Activated CD4-positive, alpha-beta T cell treated with anti-CD3 and anti-CD28 coated beads for 36 hours (primary cell): ENCODE measurements at regions of chr5 and their contacts with region 1.

Region 1: GRCh38 chr5:143605403-143606005 is 202.0 kb upstream of the NR3C1 start:
- DNase-seq: peak; percentile 55
- ATAC-seq: peak; percentile 58
- H3K4me3 Mint-ChIP-seq: peak overlapping the region; percentile 34
- H3K27ac Mint-ChIP-seq: peak overlapping the region; percentile 91
- H3K4me1 Mint-ChIP-seq: peaks cover 35% of the 10 kb centered on the region
- H3K27me3 Mint-ChIP-seq: peaks cover 4% of the 10 kb centered on the region

Region 2: GRCh38 chr5:143002459-143003328 is 602.8 kb before region 1 on chr5:
- CTCF ChIA-PET with region 1: no interaction called
- POLR2A ChIA-PET with region 1: no interaction called
- intact Hi-C with region 1: loop called in 1 of 2 experiments (anchors 10 kb)
- DNase-seq: peak; percentile 78
- ATAC-seq: peak; percentile 92
- H3K4me3 Mint-ChIP-seq: peak overlapping the region; percentile 17
- H3K27ac Mint-ChIP-seq: peak overlapping the region; percentile 93
- H3K4me1 Mint-ChIP-seq: peaks cover 50% of the 10 kb centered on the region
- H3K27me3 Mint-ChIP-seq: no peaks in the 10 kb centered on the region

Region 3: GRCh38 chr5:143101121-143101520 is 504.4 kb before region 1 on chr5:
- CTCF ChIA-PET with region 1: no interaction called
- POLR2A ChIA-PET with region 1: no interaction called
- intact Hi-C with region 1: loop called in 1 of 2 experiments (anchors 5 kb)
- DNase-seq: no peak
- ATAC-seq: peak; percentile 81
- H3K4me3 Mint-ChIP-seq: peak overlapping the region; percentile 7
- H3K27ac Mint-ChIP-seq: peak overlapping the region; percentile 68
- H3K4me1 Mint-ChIP-seq: peaks cover 31% of the 10 kb centered on the region
- H3K27me3 Mint-ChIP-seq: no peaks in the 10 kb centered on the region

Region 4: DNA sequence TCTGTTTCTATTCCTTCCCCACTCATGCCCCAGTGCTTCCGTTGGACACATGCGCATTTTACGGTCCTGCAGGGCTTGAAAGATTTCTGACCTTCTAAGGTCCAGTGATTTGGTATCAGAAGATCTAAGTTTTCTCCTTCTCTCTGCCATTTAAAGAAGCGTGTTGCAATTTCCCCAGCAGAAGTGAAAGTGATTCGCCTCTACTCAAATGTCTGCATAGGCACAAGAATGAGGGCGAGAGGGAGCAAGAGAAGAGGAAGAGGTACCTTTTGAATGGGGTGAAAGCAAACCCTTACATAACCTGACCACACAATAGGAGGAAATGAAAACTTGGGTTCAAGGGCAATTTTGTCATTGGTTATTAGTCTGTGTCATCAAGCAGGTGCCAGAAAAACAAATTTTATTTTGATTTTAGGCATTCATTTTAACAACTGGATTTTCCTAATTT is 170.3 kb before region 1 on chr5:
- CTCF ChIA-PET with region 1: interaction called, 7 read pairs
- POLR2A ChIA-PET with region 1: interaction called, 5 read pairs
- intact Hi-C with region 1: loop called (anchors 5 kb)
- DNase-seq: peak; percentile 47
- ATAC-seq: peak; percentile 39
- H3K4me3 Mint-ChIP-seq: peak overlapping the region; percentile 76
- H3K27ac Mint-ChIP-seq: peak overlapping the region; percentile 98
- H3K4me1 Mint-ChIP-seq: peaks cover 69% of the 10 kb centered on the region
- H3K27me3 Mint-ChIP-seq: no peaks in the 10 kb centered on the region

Region 5: DNA sequence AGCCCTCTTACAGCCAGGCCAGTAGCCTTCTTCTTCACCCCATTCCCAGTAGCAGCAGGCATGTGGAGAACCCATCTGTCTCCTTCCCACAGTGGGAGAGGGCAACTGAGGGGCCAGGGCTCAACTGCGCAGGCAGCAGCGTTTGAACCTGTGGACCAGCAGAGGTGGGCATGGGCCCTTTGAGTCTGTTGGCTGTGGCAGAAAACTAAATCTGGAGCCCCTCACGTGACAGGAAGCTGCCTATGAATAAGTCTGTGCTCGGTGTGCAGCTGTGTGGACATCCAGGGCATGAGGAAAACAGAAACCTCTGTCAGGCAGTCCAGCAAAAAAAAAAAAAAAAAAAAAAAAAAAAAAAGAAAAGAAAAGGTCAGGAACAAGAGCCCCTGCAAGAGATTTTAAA is 12.9 kb before region 1 on chr5:
- CTCF ChIA-PET with region 1: interaction called, 4 read pairs
- POLR2A ChIA-PET with region 1: interaction called, 4 read pairs
- intact Hi-C with region 1: loop called in 1 of 2 experiments (anchors 2 kb)
- DNase-seq: peak; percentile 44
- ATAC-seq: peak; percentile 51
- H3K4me3 Mint-ChIP-seq: no peak overlapping the region
- H3K27ac Mint-ChIP-seq: no peak overlapping the region
- H3K4me1 Mint-ChIP-seq: peaks cover 40% of the 10 kb centered on the region
- H3K27me3 Mint-ChIP-seq: no peaks in the 10 kb centered on the region

Region 6: DNA sequence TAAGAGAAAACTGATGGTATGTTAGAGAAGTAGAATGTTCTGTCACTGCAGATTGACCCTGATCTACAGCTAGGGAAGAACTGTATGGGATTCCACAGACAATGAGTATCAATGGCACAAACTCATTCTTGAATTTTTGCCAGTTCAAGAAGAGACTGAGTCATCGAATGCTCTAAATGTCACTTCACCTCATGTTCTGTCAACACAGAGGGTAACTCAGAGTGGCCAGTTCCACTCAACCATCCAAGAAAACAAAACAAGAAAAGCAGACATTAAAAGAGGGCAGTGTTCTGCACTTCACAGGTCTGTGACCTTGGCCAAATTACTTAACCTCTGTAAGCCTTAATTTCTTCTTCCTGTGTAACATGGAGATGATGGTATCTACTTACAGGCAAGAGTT is 74.3 kb after region 1 on chr5:
- CTCF ChIA-PET with region 1: no interaction called
- POLR2A ChIA-PET with region 1: no interaction called
- intact Hi-C with region 1: loop called in 1 of 2 experiments (anchors 1 kb)
- DNase-seq: no peak
- ATAC-seq: peak; percentile 71
- H3K4me3 Mint-ChIP-seq: no peak overlapping the region
- H3K27ac Mint-ChIP-seq: no peak overlapping the region
- H3K4me1 Mint-ChIP-seq: peaks cover 26% of the 10 kb centered on the region
- H3K27me3 Mint-ChIP-seq: peaks cover 2% of the 10 kb centered on the region